Brain microvascular endothelial cell (primary cell): ENCODE measurements at regions of chr10 and their contacts with region 1.

Region 1: DNA sequence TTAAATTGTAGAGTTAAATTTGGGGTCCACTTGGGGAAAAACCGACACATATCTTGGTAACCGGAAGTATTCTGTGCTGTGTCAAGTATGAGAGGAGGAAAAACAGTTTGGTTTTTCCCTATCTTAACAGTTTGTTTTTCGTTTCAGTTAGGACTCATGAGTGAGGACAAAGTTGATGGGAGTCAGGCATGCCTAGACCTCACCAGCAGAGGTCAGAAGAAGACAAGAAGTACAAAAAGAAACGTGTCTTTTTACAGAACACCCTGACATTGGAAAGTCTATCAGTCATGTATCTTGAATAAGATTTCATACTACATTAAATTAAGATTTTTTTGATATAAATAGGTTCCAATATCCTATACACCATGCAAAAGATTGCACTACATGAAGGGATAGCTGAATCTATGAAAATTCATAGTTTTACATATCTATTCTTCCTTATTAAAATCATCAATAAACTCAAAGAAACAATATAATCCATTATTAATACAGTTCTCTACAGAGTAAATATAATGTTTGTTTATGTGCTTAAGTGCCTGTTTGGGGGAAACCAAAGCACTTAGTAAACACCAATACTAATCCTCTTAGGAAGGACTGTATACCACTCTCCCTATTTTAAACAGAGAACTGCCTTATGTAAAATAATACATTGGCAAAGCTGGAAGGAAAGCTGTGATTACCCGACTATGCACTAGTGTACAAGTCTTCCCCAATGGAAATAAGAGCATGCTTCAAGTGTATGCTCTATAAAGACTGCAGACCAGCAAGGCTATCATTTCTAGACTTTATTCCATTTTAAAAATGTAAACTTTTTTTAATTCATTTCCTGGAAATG is 95.6 kb downstream of the USP6NL start:
- DNase-seq: peak; percentile 54
- H3K4me3 ChIP-seq: no peak overlapping the region
- H3K27ac ChIP-seq: no peak overlapping the region
- H3K27me3 ChIP-seq: no peaks in the 10 kb centered on the region
- CTCF ChIP-seq: peak; percentile 83

Region 2: GRCh38 chr10:11757821-11758463 is 242.1 kb after region 1 on chr10:
- in situ Hi-C with region 1: loop called (anchors 25 kb)
- DNase-seq: peak; percentile 89
- H3K4me3 ChIP-seq: no peak overlapping the region
- H3K27ac ChIP-seq: peak overlapping the region; percentile 97
- H3K27me3 ChIP-seq: no peaks in the 10 kb centered on the region
- CTCF ChIP-seq: peak; percentile 98